IMR-90 (cell line): ENCODE measurements at regions of chr6 and their contacts with region 1.

Region 1: GRCh38 chr6:83176246-83176645 is 16.8 kb downstream of the PGM3 start:
- DNase-seq: no peak
- ATAC-seq: peak; percentile 72
- H3K4me3 ChIP-seq: no peak overlapping the region
- H3K27ac ChIP-seq: no peak overlapping the region; the same call in 1 of the 2 replicates
- H3K4me1 ChIP-seq: peaks cover 5% of the 10 kb centered on the region; the same call in 1 of the 2 replicates
- H3K27me3 ChIP-seq: no peaks in the 10 kb centered on the region
- CTCF ChIP-seq: no peak
- POLR2A ChIP-seq: no peak
- RAD21 ChIP-seq: no peak

Region 2: GRCh38 chr6:82144852-82145340 is 1031.3 kb before region 1 on chr6:
- CTCF ChIA-PET with region 1: no interaction called
- POLR2A ChIA-PET with region 1: no interaction called
- dilution Hi-C with region 1: no loop called
- in situ Hi-C with region 1: no loop called
- intact Hi-C with region 1: no loop called
- DNase-seq: peak; percentile 93
- ATAC-seq: peak; percentile 56
- H3K4me3 ChIP-seq: peak overlapping the region; percentile 5; the same call in 1 of the 2 replicates
- H3K27ac ChIP-seq: no peak overlapping the region
- H3K4me1 ChIP-seq: peaks cover 3% of the 10 kb centered on the region
- H3K27me3 ChIP-seq: no peaks in the 10 kb centered on the region
- CTCF ChIP-seq: no peak
- POLR2A ChIP-seq: peak; percentile 22
- RAD21 ChIP-seq: no peak

Region 3: GRCh38 chr6:83083476-83083875 is 92.8 kb before region 1 on chr6:
- CTCF ChIA-PET with region 1: no interaction called
- POLR2A ChIA-PET with region 1: no interaction called
- dilution Hi-C with region 1: no loop called
- in situ Hi-C with region 1: no loop called
- intact Hi-C with region 1: no loop called
- DNase-seq: no peak
- ATAC-seq: no peak
- H3K4me3 ChIP-seq: no peak overlapping the region
- H3K27ac ChIP-seq: no peak overlapping the region
- H3K4me1 ChIP-seq: no peaks in the 10 kb centered on the region
- H3K27me3 ChIP-seq: no peaks in the 10 kb centered on the region
- CTCF ChIP-seq: no peak
- POLR2A ChIP-seq: no peak
- RAD21 ChIP-seq: no peak

Region 4: DNA sequence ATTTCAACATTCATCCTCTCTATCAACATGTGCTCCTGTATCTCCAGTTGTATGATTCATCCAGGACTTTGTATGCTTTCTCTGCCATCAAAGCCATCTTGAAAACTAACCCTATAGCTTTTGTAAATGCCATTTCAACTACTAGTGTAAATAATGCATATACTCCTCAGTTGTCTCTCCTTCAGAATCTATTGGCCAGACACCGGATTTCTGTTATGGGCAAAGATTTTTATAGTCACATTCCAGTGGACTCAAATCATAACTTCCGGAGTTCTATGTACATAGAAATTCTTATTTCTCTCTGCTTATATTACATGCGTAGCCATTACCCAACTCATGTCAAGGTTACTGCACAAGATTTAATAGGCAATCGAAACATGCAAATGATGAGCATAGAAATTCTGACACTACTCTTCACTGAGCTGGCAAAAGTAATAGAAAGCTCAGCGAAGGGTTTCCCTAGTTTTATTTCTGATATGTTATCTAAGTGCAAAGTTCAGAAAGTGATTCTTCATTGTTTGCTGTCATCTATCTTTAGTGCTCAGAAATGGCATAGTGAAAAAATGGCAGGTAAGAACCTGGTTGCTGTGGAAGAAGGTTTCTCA is 38.0 kb before region 1 on chr6:
- CTCF ChIA-PET with region 1: no interaction called
- POLR2A ChIA-PET with region 1: no interaction called
- dilution Hi-C with region 1: no loop called
- in situ Hi-C with region 1: no loop called
- intact Hi-C with region 1: loop called (anchors 5 kb)
- DNase-seq: no peak
- ATAC-seq: no peak
- H3K4me3 ChIP-seq: no peak overlapping the region
- H3K27ac ChIP-seq: no peak overlapping the region
- H3K4me1 ChIP-seq: no peaks in the 10 kb centered on the region
- H3K27me3 ChIP-seq: no peaks in the 10 kb centered on the region
- CTCF ChIP-seq: no peak
- POLR2A ChIP-seq: no peak
- RAD21 ChIP-seq: no peak

Region 5: DNA sequence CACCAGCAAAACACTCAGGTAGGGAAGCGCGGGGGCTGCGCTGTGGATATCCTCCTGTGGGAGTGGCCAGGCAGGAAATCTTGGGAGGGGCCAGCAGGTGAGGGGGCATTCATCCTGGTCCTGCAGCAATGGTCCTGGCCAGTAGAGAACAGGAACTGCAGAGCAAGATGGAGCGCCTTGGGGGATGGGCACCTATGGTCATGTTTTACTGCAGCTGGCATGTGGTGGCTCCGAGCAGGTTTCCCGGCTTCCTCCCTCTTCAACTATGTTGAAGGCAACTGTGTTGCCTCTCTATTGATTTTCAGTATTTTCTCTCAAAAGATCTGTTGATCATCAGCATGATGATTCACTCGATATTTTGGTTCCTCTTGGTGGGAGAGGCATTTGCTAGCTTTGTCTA is 461.7 kb after region 1 on chr6:
- CTCF ChIA-PET with region 1: no interaction called
- POLR2A ChIA-PET with region 1: no interaction called
- dilution Hi-C with region 1: no loop called
- in situ Hi-C with region 1: no loop called
- intact Hi-C with region 1: no loop called
- DNase-seq: no peak
- ATAC-seq: no peak
- H3K4me3 ChIP-seq: no peak overlapping the region
- H3K27ac ChIP-seq: no peak overlapping the region
- H3K4me1 ChIP-seq: no peaks in the 10 kb centered on the region
- H3K27me3 ChIP-seq: no peaks in the 10 kb centered on the region
- CTCF ChIP-seq: no peak
- POLR2A ChIP-seq: no peak
- RAD21 ChIP-seq: no peak